ENCODE measurements at regions of chr4 and their contacts with region 1.

Region 1: GRCh38 chr4:169566021-169566818 is 46.2 kb downstream of the NEK1 start:
- DNase-seq: peak; percentile 13 to 46
- ATAC-seq: peak; percentile 82 to 85
- H3K4me3 ChIP-seq: no peak overlapping the region
- H3K27ac ChIP-seq: no peak overlapping the region
- H3K4me1 ChIP-seq: no peaks in the 10 kb centered on the region
- CTCF ChIP-seq: peak; percentile 71
- EP300 ChIP-seq: no peak
- POLR2A ChIP-seq: no peak
- RAD21 ChIP-seq: peak; percentile 67

Region 2: GRCh38 chr4:168923526-168924194 is 642.6 kb before region 1 on chr4:
- CTCF ChIA-PET with region 1: interaction called, 10 read pairs
- POLR2A ChIA-PET with region 1: no interaction called
- DNase-seq: peak; percentile 55 to 78
- ATAC-seq: peak; percentile 79 to 86; a peak in 5 of 6 replicates
- H3K4me3 ChIP-seq: no peak overlapping the region
- H3K27ac ChIP-seq: no peak overlapping the region
- H3K4me1 ChIP-seq: peaks cover 6% of the 10 kb centered on the region; the same call in 1 of the 3 replicates
- CTCF ChIP-seq: peak; percentile 70
- EP300 ChIP-seq: no peak
- POLR2A ChIP-seq: no peak
- RAD21 ChIP-seq: peak; percentile 61 to 67

Region 3: GRCh38 chr4:169582205-169582604 is 16.0 kb after region 1 on chr4:
- CTCF ChIA-PET with region 1: no interaction called
- POLR2A ChIA-PET with region 1: no interaction called
- DNase-seq: no peak
- ATAC-seq: no peak
- H3K4me3 ChIP-seq: no peak overlapping the region
- H3K27ac ChIP-seq: no peak overlapping the region
- H3K4me1 ChIP-seq: no peaks in the 10 kb centered on the region
- CTCF ChIP-seq: no peak
- EP300 ChIP-seq: no peak
- POLR2A ChIP-seq: no peak
- RAD21 ChIP-seq: no peak

Measured in A549 (cell line).